Activated B cell treated with CpG ODN at 0.5 μM for 24 hours (primary cell): ENCODE measurements at regions of chr17 and their contacts with region 1.

Region 1: GRCh38 chr17:75877752-75878173 is 618 bp downstream of the TRIM47 start:
- DNase-seq: peak; percentile 73
- ATAC-seq: peak; percentile 83
- H3K4me3 Mint-ChIP-seq: peak overlapping the region; percentile 82
- H3K27ac Mint-ChIP-seq: peak overlapping the region; percentile 79
- H3K4me1 Mint-ChIP-seq: peaks cover 28% of the 10 kb centered on the region
- H3K27me3 Mint-ChIP-seq: peaks cover 8% of the 10 kb centered on the region
- CTCF ChIP-seq: no peak

Region 2: DNA sequence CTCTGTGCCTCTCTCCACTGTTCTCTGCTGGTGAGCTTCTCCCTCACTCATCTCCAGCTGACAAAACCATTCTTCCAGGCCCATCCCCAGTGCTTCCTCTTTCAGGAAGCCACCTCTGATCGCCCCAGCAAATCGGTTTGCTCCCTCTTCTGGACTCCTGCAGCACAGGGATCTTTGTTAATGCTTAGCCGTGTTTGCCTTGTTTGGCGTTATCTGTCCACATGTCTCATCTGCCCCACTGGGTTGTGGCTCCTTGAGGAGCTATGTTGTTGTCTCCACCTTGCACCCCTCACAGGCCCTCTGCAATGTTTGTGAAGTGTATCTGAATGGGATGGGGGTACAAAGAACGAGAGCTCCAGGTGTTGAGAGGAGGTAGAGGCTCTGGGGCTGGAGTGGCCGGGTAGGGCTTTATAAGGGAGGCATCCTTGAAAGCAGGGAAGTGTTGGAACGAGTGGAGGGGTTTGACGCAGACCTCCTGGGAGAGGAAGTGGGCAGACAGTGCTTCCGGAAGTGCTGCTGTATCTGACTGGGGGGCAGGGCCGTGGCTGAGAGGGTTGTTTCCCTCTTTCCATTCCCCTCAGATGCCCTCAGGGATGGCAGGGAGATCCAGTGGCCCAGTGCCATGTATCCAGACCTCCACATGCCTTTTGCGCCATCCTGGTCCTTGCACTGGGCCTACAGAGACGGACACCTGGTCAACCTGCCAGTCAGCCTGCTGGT is 390.3 kb before region 1 on chr17:
- CTCF ChIA-PET with region 1: no interaction called
- POLR2A ChIA-PET with region 1: no interaction called
- intact Hi-C with region 1: no loop called
- DNase-seq: peak; percentile 36
- ATAC-seq: peak; percentile 93
- H3K4me3 Mint-ChIP-seq: peak overlapping the region; percentile 58
- H3K27ac Mint-ChIP-seq: peak overlapping the region; percentile 84
- H3K4me1 Mint-ChIP-seq: peaks cover 27% of the 10 kb centered on the region
- H3K27me3 Mint-ChIP-seq: no peaks in the 10 kb centered on the region
- CTCF ChIP-seq: no peak

Region 3: GRCh38 chr17:75697651-75698291 is 180.0 kb before region 1 on chr17:
- CTCF ChIA-PET with region 1: no interaction called
- POLR2A ChIA-PET with region 1: no interaction called
- intact Hi-C with region 1: no loop called
- DNase-seq: no peak
- ATAC-seq: no peak
- H3K4me3 Mint-ChIP-seq: no peak overlapping the region
- H3K27ac Mint-ChIP-seq: no peak overlapping the region
- H3K4me1 Mint-ChIP-seq: no peaks in the 10 kb centered on the region
- H3K27me3 Mint-ChIP-seq: no peaks in the 10 kb centered on the region
- CTCF ChIP-seq: no peak

Region 4: GRCh38 chr17:75771334-75772281 is 106.2 kb before region 1 on chr17:
- CTCF ChIA-PET with region 1: no interaction called
- POLR2A ChIA-PET with region 1: interaction called, 44 read pairs
- intact Hi-C with region 1: no loop called
- DNase-seq: no peak
- ATAC-seq: no peak
- H3K4me3 Mint-ChIP-seq: no peak overlapping the region
- H3K27ac Mint-ChIP-seq: no peak overlapping the region
- H3K4me1 Mint-ChIP-seq: peaks cover 15% of the 10 kb centered on the region
- H3K27me3 Mint-ChIP-seq: no peaks in the 10 kb centered on the region
- CTCF ChIP-seq: no peak

Region 5: DNA sequence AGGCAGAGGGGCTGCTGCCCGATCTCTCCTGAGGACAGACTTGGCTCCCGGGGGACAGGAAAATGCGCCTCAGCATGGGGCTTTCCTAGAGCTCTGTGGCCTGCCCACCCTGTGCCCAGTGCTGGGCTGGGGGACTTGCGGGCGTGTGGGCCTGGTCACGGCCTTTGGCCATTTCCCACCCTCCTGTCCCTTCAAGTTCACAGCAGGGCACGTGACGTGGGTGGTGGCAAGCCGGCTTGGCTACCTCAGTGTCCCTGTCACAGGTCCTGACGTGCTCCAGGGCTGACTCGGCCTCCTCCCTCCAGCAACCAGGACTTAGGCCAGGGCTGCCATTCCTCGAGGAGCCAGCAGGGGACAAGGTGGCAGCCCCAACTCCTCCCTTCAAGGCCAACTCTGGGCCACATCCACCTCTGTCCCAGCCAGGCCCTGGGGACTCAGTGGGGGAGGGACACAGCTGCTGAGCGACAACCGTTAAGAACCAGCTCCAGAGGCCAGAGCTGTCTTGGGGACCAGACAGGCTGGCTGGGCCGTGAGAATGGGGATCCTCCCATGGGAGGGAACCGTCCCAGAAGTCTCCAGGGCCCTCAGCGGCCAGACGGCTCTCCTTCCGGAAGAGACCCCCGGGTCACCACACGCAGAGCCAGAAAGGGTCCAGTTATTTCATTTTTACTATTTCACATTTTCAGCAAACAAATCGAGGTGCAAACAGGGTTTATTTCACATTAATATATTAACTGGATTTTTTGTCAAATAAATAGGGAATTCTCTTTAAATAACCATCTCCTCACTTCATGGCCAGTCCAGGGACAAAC is 32.5 kb before region 1 on chr17:
- CTCF ChIA-PET with region 1: interaction called, 9 read pairs
- POLR2A ChIA-PET with region 1: interaction called, 7 read pairs
- intact Hi-C with region 1: loop called (anchors 5 kb)
- DNase-seq: peak; percentile 71
- ATAC-seq: peak; percentile 90
- H3K4me3 Mint-ChIP-seq: peak overlapping the region; percentile 66
- H3K27ac Mint-ChIP-seq: peak overlapping the region; percentile 75
- H3K4me1 Mint-ChIP-seq: peaks cover 29% of the 10 kb centered on the region
- H3K27me3 Mint-ChIP-seq: no peaks in the 10 kb centered on the region
- CTCF ChIP-seq: no peak

Region 6: GRCh38 chr17:75864448-75864871 is 13.3 kb before region 1 on chr17:
- CTCF ChIA-PET with region 1: interaction called, 9 read pairs
- POLR2A ChIA-PET with region 1: interaction called, 129 read pairs
- intact Hi-C with region 1: loop called (anchors 1 kb)
- DNase-seq: peak; percentile 52
- ATAC-seq: peak; percentile 90
- H3K4me3 Mint-ChIP-seq: peak overlapping the region; percentile 28
- H3K27ac Mint-ChIP-seq: peak overlapping the region; percentile 86
- H3K4me1 Mint-ChIP-seq: peaks cover 27% of the 10 kb centered on the region
- H3K27me3 Mint-ChIP-seq: no peaks in the 10 kb centered on the region
- CTCF ChIP-seq: no peak

Region 7: DNA sequence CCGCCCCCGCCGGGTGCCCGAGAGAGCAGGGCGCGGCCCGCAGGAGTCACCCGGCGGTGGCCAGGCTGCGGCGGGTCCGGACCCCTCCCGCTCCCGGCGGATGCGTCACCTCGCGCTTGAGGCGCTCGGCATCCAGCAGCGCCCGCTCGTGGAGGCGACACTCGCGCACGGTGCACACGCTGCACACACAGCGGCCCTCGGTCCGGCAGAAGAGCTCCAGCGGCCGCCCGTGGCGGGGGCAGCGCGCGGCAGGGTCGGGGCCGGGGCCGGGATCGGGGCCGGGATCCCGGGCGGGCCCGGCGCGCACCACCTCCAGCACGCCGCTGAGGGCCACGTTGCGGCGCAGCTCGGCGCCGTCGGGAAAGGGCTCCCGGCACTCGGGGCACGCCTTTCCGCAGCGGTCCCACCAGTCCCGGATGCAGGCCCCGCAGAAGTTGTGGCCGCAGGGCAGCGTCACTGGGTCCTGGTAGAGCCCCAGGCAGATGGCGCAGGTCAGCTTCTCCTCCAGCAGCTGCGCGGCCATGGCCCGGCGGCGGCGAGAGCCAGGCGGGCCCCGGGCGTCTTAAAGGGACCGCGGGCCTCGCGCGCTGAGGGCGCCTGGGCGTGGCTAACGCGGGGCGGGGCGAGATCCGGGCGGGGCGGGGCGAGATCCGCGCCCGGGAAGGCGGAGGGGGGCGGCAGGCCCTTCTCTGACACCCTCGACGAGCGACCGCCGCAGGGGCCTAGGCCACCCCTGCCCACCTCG is 18.8 kb after region 1 on chr17 and contains the start of gene TRIM65:
- CTCF ChIA-PET with region 1: interaction called, 8 read pairs
- POLR2A ChIA-PET with region 1: interaction called, 38 read pairs
- intact Hi-C with region 1: loop called (anchors 1 kb)
- DNase-seq: peak; percentile 86
- ATAC-seq: peak; percentile 85
- H3K4me3 Mint-ChIP-seq: peak within 1 kb of the TSS; percentile 82
- H3K27ac Mint-ChIP-seq: peak within 1 kb of the TSS; percentile 73
- H3K4me1 Mint-ChIP-seq: peaks cover 27% of the 10 kb centered on the region
- H3K27me3 Mint-ChIP-seq: no peaks in the 10 kb centered on the region
- CTCF ChIP-seq: no peak
- total RNA-seq, gene TRIM65: 20.0 and 22.4 TPM in 2 replicates